Endothelial cell of umbilical vein (primary cell): ENCODE measurements at regions of chr3 and their contacts with region 1.

Region 1: DNA sequence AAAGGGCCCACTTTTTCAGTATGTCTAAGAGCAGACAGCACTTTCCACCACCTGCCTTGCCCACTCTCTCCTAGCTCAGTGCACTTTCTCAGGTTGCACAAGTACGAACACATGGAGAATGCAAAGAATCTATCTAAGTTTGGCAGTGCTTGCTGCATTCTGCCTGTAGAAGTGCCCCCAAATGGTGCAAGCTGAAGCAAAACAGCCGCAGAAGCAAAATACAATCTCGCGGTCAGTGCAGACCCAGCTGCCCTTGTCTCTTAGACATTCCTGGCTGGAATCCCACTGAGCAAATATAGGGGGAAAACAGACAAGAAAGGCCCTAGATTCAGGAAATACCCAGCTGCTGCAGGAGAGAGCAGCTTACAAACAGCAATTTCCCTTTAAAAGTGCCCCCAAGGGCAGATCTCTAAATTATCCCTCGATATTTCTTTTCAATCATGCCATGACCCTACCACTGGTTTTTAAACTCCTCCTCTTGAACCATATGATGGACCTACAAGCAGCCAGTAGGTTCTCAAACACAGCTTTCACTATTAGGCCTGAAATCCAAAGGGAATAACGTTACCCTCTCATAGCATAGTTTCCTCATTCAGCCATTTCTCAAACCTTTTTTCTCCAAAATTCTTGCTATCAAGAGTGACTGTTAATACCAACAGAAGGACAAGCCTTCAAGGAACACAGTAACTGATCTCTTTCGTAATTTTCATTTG is 67.0 kb downstream of the TNIK start:
- DNase-seq: peak; percentile 81
- H3K4me3 ChIP-seq: no peak overlapping the region
- H3K27ac ChIP-seq: peak overlapping the region; percentile 10
- H3K4me1 ChIP-seq: peaks cover 29% of the 10 kb centered on the region
- H3K27me3 ChIP-seq: no peaks in the 10 kb centered on the region
- CTCF ChIP-seq: no peak
- POLR2A ChIP-seq: no peak

Region 2: GRCh38 chr3:170037463-170038433 is 1355.4 kb before region 1 on chr3 and contains the start of gene GPR160:
- CTCF ChIA-PET with region 1: no interaction called
- POLR2A ChIA-PET with region 1: interaction called, 12 read pairs
- dilution Hi-C with region 1: no loop called
- intact Hi-C with region 1: no loop called
- DNase-seq: peak; percentile 26
- H3K4me3 ChIP-seq: peak within 1 kb of the TSS; percentile 30 to 43 (median 38)
- H3K27ac ChIP-seq: no peak within 1 kb of the TSS
- H3K4me1 ChIP-seq: peaks cover 5% of the 10 kb centered on the region
- H3K27me3 ChIP-seq: peaks cover 31 to 33% of the 10 kb centered on the region in 2 experiments
- CTCF ChIP-seq: peak; percentile 48 to 79
- POLR2A ChIP-seq: no peak
- total RNA-seq, gene GPR160: 1.1 and 1.3 TPM in 2 replicates

Region 3: GRCh38 chr3:171193693-171194092 is 199.5 kb before region 1 on chr3:
- CTCF ChIA-PET with region 1: interaction called, 3 read pairs
- POLR2A ChIA-PET with region 1: no interaction called
- dilution Hi-C with region 1: no loop called
- intact Hi-C with region 1: loop called (anchors 1 kb)
- DNase-seq: peak; percentile 97
- H3K4me3 ChIP-seq: no peak overlapping the region
- H3K27ac ChIP-seq: peak overlapping the region; percentile 91
- H3K4me1 ChIP-seq: peaks cover 66% of the 10 kb centered on the region
- H3K27me3 ChIP-seq: no peaks in the 10 kb centered on the region
- CTCF ChIP-seq: no peak
- POLR2A ChIP-seq: no peak

Region 4: GRCh38 chr3:171236265-171236994 is 156.8 kb before region 1 on chr3:
- CTCF ChIA-PET with region 1: no interaction called
- POLR2A ChIA-PET with region 1: no interaction called
- dilution Hi-C with region 1: no loop called
- intact Hi-C with region 1: no loop called
- DNase-seq: no peak
- H3K4me3 ChIP-seq: no peak overlapping the region
- H3K27ac ChIP-seq: no peak overlapping the region
- H3K4me1 ChIP-seq: peaks cover 3% of the 10 kb centered on the region
- H3K27me3 ChIP-seq: no peaks in the 10 kb centered on the region
- CTCF ChIP-seq: no peak
- POLR2A ChIP-seq: no peak

Region 5: DNA sequence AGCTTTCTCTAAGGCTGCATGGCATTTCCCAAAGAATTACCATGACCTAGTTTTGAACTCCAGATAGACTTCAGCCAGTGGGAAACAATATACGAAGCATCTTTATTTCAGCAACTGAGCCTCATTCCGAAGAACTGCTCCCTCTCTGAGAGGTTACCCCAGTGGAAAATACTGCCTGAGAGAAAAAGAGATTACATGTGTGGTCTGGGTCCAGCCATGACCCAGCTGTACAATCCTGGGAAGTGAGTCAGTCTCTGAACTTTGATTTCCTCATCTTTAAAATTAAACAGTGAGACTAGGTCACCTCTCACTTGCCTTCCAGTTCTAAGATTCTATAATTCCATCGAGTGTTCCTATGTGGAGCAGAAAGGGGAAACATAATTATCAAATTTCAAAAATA is 24.6 kb after region 1 on chr3:
- CTCF ChIA-PET with region 1: no interaction called
- POLR2A ChIA-PET with region 1: no interaction called
- dilution Hi-C with region 1: no loop called
- intact Hi-C with region 1: no loop called
- DNase-seq: peak; percentile 87
- H3K4me3 ChIP-seq: no peak overlapping the region
- H3K27ac ChIP-seq: peak overlapping the region; percentile 73
- H3K4me1 ChIP-seq: peaks cover 23% of the 10 kb centered on the region
- H3K27me3 ChIP-seq: no peaks in the 10 kb centered on the region
- CTCF ChIP-seq: no peak
- POLR2A ChIP-seq: no peak